ENCODE measurements at regions of chr17 and their contacts with region 1.

Region 1: DNA sequence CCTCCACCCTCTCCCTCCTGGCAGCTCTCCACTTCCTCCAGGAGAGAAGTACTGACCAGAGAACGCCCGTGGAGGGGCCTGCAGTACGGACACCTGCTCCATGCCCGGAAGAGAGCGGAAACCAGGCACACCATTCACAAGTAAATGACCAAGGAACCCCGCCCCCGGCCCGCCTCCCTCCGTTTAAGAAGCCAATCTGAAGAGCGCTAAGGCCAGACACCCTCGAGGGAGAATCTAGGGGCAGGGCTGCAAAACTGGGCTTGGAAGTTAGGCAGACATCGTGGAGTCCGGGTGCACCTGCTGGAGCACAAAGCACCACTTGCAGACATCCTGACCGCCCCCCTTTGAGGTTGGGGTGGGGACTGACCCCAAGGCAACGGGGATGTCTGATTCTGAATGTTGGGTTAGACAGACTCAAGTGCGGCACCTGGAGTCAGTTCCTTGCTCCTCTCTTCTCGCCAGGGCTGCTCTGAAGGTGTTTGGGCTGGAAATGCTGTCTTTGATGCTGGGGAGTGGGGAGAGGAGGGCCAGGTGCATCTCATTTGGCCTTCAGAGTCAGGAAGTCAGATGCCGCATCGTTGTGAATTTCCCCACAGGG is 964 bp upstream of the FAAP100 start:
- DNase-seq: peak; percentile 53 to 73
- ATAC-seq: peak; percentile 23 to 70 (median 49)
- H3K4me3 ChIP-seq: peak overlapping the region; percentile 78 to 99 (median 96)
- H3K27ac ChIP-seq: peak overlapping the region; percentile 38 to 95 (median 92)
- H3K4me1 ChIP-seq: peaks cover 26 to 61% (median 55%) of the 10 kb centered on the region in 9 donors
- H3K27me3 ChIP-seq: no peaks in the 10 kb centered on the region
- CTCF ChIP-seq: no peak

Region 2: DNA sequence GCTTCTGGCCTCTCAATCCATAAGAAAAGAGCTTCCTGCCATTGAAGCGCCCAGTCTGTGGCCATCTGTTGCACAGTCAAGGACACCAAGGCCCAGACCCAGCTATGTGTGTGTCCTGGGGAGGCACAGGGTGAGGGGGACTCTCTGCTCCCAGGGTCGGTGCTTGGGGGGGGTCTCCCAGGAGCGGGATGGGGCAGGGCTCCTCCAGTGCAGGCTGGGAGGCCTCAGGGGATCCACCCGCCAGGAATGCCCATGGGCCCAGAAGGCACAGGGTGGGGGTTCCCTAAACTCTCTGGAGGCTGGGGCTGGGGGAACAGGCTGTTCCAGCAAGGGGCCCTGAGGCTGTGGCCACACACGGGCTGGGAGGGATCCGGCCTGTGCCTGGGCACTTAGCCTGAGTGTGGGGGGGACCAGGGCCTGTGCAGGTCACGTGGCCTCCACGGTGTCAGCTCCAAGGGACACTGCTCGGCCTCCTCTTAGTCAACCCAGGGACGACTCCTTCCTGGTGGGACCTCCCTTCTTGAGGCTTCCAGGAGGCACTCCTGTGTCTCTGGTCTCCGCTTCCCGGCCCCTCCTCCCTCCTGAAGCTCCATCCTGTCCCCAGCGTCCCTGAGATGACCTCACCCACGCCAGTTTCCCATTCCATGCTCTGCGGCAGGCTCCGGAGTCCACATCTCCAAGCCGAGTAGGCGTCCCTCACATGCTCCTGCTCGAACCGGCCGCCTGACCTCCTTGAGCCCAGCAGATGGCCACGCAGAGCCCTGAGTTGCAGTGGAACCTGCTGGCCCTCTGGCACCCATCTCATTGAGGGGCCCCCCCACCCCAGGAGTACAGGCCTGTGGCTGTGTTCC is 181.0 kb before region 1 on chr17:
- intact Hi-C with region 1: no loop called
- DNase-seq: peak; percentile 67 to 80
- ATAC-seq: peak; percentile 85 to 95 (median 90)
- H3K4me3 ChIP-seq: peak overlapping the region in 1 of 10 donors; percentile 1
- H3K27ac ChIP-seq: peak overlapping the region in 9 of 10 donors; percentile 52 to 86 (median 77)
- H3K4me1 ChIP-seq: peaks cover 3 to 19% (median 17%) of the 10 kb centered on the region in 9 donors
- H3K27me3 ChIP-seq: peaks cover 0 to 2% (median 0%) of the 10 kb centered on the region in 7 donors
- CTCF ChIP-seq: peak in 8 of 9 donors; percentile 5 to 58 (median 38)

Region 3: GRCh38 chr17:81471804-81472456 is 81.2 kb before region 1 on chr17:
- intact Hi-C with region 1: no loop called
- DNase-seq: no peak
- ATAC-seq: peak in 7 of 8 donors; percentile 31 to 68 (median 58)
- H3K4me3 ChIP-seq: no peak overlapping the region
- H3K27ac ChIP-seq: no peak overlapping the region
- H3K4me1 ChIP-seq: peaks cover 0 to 11% (median 0%) of the 10 kb centered on the region in 9 donors
- H3K27me3 ChIP-seq: no peaks in the 10 kb centered on the region
- CTCF ChIP-seq: peak in 4 of 9 donors; percentile 13 to 20 (median 16)

Region 4: DNA sequence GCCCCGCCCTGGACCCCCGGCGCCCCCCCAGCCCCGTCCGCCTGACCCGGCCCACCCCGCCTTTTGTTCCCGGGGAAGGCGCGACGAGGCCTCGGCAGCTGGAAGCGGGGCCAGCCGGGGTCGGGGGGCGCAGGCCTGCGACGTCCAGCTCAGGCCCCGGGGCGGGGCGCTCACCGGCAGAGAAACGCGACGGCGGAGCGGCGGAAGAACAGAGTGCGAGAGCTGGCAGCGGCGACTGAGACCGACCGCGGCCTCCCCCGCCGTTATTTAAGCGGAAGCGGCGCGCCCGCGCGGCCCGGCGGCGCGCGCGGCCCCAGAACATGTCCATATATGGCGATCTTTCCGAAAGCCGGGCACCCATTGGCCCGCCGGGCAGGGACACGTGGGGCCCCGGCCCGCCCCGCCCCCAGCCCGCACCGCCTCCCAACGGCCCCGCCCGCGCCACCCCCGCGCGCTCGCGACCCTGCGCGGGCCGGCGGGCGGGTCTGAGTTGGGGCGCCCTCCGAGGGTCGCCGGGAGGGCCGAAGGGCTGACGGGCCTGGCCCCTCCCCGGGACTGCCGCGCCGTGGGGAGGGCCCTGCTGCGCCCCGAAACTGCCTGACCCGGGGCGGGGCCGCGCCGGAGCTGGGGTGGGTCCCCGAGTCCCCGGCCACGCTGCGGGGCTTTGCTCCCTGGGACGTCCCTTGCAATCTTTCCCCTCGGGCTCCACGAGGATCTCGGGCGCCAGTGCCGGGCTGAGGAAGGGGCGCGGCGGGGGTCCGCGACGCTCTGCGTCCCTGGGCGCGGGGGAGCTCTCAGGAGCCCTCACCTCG is 40.4 kb before region 1 on chr17 and contains the start of gene ACTG1:
- intact Hi-C with region 1: loop called in 1 of 10 experiments (anchors 5 kb)
- DNase-seq: peak; percentile 93
- ATAC-seq: peak; percentile 52 to 80 (median 69)
- H3K4me3 ChIP-seq: peak within 1 kb of the TSS; percentile 73 to 99 (median 94)
- H3K27ac ChIP-seq: peak within 1 kb of the TSS; percentile 98 to 100 (median 100)
- H3K4me1 ChIP-seq: peaks cover 14 to 66% (median 49%) of the 10 kb centered on the region in 9 donors
- H3K27me3 ChIP-seq: no peaks in the 10 kb centered on the region
- CTCF ChIP-seq: no peak
- total RNA-seq, gene ACTG1: 298 to 959 (median 345) TPM

Region 5: GRCh38 chr17:81684238-81684887 is 131.2 kb after region 1 on chr17:
- intact Hi-C with region 1: no loop called
- DNase-seq: no peak
- ATAC-seq: peak in 1 of 8 donors; percentile 39
- H3K4me3 ChIP-seq: peak overlapping the region; percentile 71 to 100 (median 95)
- H3K27ac ChIP-seq: peak overlapping the region in 9 of 10 donors; percentile 74 to 96 (median 91)
- H3K4me1 ChIP-seq: peaks cover 15 to 56% (median 32%) of the 10 kb centered on the region in 9 donors
- H3K27me3 ChIP-seq: no peaks in the 10 kb centered on the region
- CTCF ChIP-seq: no peak